ENCODE measurements at regions of chr5 and their contacts with region 1.

Region 1: DNA sequence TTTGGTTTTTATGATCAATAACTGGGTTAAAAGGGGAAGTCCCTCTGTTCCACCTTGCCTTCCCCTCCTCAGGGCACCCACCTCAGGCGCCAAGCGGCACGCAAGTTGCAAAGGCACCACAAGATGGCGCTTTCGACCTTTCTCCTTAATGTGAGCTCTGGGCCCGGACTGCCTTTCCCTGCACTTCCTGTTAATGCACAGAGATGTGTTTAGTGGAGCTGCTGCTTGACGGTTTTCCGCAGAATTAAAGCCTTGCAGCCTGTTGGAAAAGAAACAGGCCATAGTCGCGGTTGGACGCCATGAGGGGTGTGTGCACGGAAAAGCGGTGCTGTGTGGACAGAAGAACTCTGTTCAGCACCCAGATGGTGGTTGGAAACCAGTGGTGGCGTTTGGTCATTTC is 17.9 kb downstream of the CXCL14 start:
- DNase-seq: peak; percentile 88
- H3K4me3 Mint-ChIP-seq: no peak overlapping the region
- H3K27ac Mint-ChIP-seq: no peak overlapping the region
- H3K4me1 Mint-ChIP-seq: peaks cover 4% of the 10 kb centered on the region
- H3K27me3 Mint-ChIP-seq: peaks cover 29% of the 10 kb centered on the region

Region 2: DNA sequence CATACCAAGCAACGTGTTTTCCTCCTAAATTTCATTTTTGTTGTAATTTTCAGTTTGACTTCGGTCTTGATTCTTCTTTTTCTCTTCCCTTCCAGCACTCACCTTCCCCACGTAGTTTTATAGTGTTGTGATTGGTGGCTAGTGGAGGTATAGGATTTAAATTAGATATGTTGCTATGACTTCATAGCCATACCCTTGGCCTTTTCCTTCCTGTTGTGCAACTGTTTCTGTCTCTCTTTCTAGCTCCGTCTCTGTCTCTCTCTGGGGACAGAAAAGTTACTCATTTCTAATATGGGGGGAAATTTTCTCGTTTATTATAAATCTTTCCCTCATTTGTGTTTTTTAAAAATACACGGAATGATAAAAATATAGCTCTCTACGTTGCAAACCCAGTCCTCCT is 735.6 kb before region 1 on chr5:
- CTCF ChIA-PET with region 1: no interaction called
- intact Hi-C with region 1: no loop called
- DNase-seq: no peak
- H3K4me3 Mint-ChIP-seq: no peak overlapping the region
- H3K27ac Mint-ChIP-seq: no peak overlapping the region
- H3K4me1 Mint-ChIP-seq: no peaks in the 10 kb centered on the region
- H3K27me3 Mint-ChIP-seq: no peaks in the 10 kb centered on the region

Region 3: DNA sequence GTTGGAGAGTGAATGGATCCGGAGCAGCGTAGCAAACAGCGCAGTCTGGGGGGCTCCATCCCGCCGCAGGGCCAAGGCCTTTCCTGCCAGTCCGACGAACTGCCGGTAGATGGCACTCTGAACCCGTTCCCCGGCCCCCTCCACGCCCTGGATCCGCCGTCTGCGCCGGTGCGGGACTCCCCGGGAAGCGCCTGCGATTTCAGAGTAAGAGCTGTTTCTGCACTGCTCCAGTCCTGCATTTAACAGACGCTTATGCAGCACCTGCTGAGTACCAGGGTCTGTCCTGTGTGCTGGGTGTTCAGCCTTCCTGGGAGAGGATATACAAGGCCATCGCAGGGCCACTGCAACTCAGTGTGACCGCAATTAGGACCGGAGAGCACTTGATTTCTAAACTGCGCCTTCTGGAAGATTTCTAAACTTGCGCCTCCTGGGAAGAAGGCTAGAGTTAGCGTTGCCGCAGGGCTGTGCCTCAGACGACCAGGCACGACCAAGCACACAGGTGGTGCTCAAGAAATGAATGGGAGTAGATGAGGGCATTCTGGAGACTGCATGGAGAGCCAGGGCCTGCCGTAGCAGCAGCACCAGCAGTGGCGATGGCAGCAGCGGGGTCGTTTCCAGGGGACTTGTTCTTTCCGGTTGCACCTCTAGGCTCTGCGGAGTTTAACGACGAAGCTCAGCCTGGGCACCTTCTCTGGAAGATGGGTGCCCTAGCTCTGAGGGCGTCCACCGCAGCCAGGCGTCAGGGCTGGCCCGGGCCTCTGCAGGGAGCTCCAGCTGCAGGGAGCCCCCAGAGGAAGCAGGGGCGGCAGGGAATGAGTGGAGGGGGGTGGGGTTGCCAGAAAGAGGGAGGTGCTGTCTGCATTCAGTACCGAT is 94.4 kb before region 1 on chr5:
- CTCF ChIA-PET with region 1: interaction called, 438 read pairs
- intact Hi-C with region 1: loop called (anchors 1 kb)
- DNase-seq: peak; percentile 85
- H3K4me3 Mint-ChIP-seq: peak overlapping the region; percentile 49
- H3K27ac Mint-ChIP-seq: no peak overlapping the region
- H3K4me1 Mint-ChIP-seq: peaks cover 6% of the 10 kb centered on the region
- H3K27me3 Mint-ChIP-seq: peaks cover 28% of the 10 kb centered on the region

Region 4: DNA sequence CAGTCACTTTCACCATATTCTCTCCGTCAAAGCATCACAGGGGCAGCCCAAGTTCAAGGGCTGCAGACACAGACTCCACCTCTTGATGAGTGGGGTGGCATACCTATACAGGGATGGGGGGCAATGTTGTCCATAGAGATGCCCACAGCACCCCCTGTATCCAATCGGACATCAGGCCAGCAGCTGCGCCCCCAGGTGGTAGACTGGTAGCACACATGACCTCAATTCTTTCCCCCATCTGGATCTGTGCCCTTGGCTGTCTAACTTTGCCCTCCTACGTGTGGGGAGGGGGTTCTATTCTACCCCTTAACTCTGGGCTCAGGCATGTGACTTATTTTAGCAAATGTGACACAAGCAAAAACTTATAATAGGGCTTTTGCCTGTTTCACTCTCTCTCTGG is 189.6 kb after region 1 on chr5:
- CTCF ChIA-PET with region 1: interaction called, 3 read pairs
- intact Hi-C with region 1: loop called (anchors 10 kb)
- DNase-seq: no peak
- H3K4me3 Mint-ChIP-seq: no peak overlapping the region
- H3K27ac Mint-ChIP-seq: no peak overlapping the region
- H3K4me1 Mint-ChIP-seq: no peaks in the 10 kb centered on the region
- H3K27me3 Mint-ChIP-seq: peaks cover 2% of the 10 kb centered on the region

Region 5: GRCh38 chr5:135829681-135830383 is 269.0 kb after region 1 on chr5:
- CTCF ChIA-PET with region 1: interaction called, 16 read pairs
- intact Hi-C with region 1: loop called (anchors 1 kb)
- DNase-seq: peak; percentile 62
- H3K4me3 Mint-ChIP-seq: no peak overlapping the region
- H3K27ac Mint-ChIP-seq: no peak overlapping the region
- H3K4me1 Mint-ChIP-seq: peaks cover 4% of the 10 kb centered on the region
- H3K27me3 Mint-ChIP-seq: peaks cover 43% of the 10 kb centered on the region

Region 6: GRCh38 chr5:136080483-136081216 is 519.8 kb after region 1 on chr5:
- CTCF ChIA-PET with region 1: no interaction called
- intact Hi-C with region 1: loop called (anchors 5 kb)
- DNase-seq: peak; percentile 62
- H3K4me3 Mint-ChIP-seq: peak overlapping the region; percentile 12
- H3K27ac Mint-ChIP-seq: no peak overlapping the region
- H3K4me1 Mint-ChIP-seq: peaks cover 2% of the 10 kb centered on the region
- H3K27me3 Mint-ChIP-seq: peaks cover 23% of the 10 kb centered on the region

Measured in activated naive CD4-positive, alpha-beta T cell treated with anti-CD3 and anti-CD28 coated beads for 36 hours (primary cell).